Left cardiac atrium (tissue), 4 donors: ENCODE measurements at regions of chr19 and their contacts with region 1.

Region 1: GRCh38 chr19:56155124-56155687 is 14.1 kb downstream of the ZNF444 start:
- DNase-seq: no peak
- ATAC-seq: peak in 1 of 2 donors; percentile 30

Region 2: GRCh38 chr19:56085571-56086275 is 69.5 kb before region 1 on chr19:
- intact Hi-C with region 1: loop called in 1 of 2 experiments (anchors 5 kb)
- DNase-seq: no peak
- ATAC-seq: no peak

Region 3: DNA sequence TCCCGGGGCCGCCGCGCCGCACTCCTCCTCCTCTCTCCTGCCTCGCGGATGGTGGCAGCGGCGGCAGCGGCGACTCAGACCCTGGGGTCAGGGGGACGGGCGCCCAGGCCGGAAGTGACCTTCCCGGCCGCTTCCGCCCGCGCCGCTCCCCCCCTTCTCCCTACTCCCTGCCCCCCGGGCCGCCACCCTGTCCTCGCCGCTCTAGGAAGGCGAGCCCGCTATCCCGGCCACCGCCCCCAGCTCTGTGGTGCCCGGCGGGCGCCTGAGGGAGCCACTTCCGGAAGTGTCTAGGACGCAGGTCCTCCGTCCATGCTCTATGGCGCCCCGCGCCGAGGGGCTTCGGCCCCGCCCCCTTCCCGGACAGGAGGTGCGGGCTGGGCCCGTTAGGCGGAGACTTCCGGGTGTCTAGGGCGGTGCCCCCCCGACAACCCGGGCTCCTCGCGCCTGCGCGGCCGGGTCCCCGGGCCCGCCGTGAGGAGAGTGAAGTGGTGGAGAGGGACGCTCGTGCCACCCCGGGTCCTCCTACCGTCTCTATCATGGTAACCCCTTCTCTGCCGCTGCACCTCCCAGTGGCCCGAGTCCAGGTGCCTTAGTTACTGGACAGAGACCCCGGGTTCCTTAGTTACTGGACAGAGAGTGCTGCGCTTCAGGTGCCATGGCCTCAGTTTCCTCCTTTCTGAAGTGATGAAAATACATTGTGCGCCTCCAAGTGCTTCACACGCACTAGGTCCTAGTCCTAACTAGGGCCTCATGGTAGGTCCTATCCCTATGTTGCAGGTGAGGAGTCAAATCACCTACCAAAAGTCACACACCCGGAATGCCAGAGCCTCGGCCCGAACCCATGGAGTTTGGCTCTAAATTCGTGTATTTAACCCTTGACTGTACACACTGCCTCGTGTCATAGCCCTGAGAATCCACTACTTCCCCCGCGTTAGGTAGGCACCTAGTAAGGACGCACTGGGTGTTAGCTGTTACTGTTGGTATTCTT is 33.7 kb before region 1 on chr19 and contains the start of gene ZNF787:
- intact Hi-C with region 1: no loop called
- DNase-seq: peak; percentile 99
- ATAC-seq: peak; percentile 94 to 96
- total RNA-seq, gene ZNF787: 27.5 to 37.9 TPM